ENCODE measurements at regions of chr12 and their contacts with region 1.

Region 1: DNA sequence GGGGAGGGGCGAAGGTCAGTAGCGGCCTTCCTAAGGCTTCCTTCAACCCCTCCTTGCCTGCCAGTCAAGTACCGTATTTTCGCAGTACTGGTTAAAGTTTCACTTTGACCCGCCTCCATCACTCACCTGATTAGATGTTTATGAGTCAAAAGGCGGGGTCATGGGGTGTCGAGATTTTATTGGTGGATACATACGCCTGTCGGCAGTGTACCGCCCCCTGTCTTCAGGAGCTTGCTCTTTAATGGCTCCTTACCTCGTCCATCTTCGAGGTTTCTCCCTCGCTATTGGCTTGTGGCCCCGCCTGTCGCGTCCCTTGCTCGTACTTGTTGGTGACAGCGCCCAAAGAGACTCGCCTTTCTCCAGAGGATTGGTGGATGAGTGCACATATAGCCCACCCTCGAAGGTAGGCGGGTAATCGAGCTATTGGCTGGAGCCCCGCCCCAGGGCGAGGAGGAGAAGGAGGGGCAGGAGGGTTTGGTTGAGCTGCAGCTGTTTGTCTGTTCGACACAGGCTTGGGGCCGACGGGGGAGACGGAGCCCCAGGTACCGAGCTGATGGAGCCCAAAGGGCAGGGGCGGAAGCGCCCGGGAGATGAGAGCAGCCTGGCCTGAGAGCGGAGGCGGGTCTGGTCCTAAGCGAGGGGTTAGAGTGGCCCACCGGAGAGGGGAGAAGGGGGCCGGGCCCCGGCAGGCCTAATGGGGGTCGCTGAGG is at the start of gene RAB5B:
- DNase-seq: peak; percentile 99
- H3K4me3 Mint-ChIP-seq: no peak within 1 kb of the TSS
- H3K27ac Mint-ChIP-seq: no peak within 1 kb of the TSS
- H3K4me1 Mint-ChIP-seq: peaks cover 28% of the 10 kb centered on the region
- H3K27me3 Mint-ChIP-seq: no peaks in the 10 kb centered on the region
- total RNA-seq, gene RAB5B: 70.1 to 71.5 TPM

Region 2: DNA sequence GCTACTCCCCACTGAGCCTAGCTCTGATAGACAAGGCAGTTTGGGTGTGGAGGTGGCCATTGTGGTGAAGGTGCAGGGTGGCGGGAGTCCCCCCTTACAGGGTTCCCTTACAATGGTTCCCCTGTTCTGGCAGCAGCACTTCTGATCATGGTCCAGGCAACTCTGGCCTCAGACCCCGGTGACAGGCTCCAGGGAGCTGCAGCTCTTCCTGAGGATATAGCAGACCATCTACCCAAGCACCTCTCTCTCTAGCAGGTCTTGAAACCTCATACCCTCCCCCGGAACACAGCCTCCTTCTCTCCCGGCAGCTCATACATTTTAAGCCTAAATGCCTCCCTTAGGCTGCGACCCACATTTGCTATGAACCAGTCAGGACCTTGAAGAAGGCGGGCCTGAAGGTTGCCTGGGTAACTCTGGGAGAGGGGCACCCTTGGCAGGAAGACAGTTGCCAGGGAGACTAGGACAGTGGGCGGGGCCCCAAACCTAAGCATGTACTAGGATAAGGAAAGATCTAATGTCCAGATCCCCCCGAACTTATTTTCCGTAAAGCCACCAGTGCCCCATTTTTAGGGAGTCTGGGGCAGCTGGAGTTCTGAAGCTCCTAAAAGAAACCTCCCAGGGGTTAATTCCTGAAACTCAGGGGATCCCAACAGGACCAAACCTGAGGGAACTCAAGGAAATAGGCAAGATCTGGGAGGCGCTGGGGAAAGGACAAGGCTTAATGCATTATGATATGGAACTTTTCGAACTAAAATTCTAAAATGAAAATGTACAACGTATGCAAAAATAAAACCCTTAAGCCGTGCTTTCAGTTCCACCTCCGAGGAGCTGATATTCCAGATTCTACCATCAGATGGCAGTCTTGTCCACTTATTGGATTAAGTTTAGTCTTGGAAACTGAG is 235.4 kb before region 1 on chr12:
- CTCF ChIA-PET with region 1: interaction called, 22 read pairs
- POLR2A ChIA-PET with region 1: interaction called, 11 read pairs
- DNase-seq: peak; percentile 87
- H3K4me3 Mint-ChIP-seq: peak overlapping the region; percentile 88
- H3K27ac Mint-ChIP-seq: peak overlapping the region; percentile 84
- H3K4me1 Mint-ChIP-seq: peaks cover 33% of the 10 kb centered on the region
- H3K27me3 Mint-ChIP-seq: peaks cover 11% of the 10 kb centered on the region

Region 3: GRCh38 chr12:55829967-55830600 is 143.7 kb before region 1 on chr12:
- CTCF ChIA-PET with region 1: interaction called, 4 read pairs
- POLR2A ChIA-PET with region 1: interaction called, 10 read pairs
- DNase-seq: peak; percentile 50
- H3K4me3 Mint-ChIP-seq: peak overlapping the region; percentile 99
- H3K27ac Mint-ChIP-seq: peak overlapping the region; percentile 94
- H3K4me1 Mint-ChIP-seq: peaks cover 54% of the 10 kb centered on the region
- H3K27me3 Mint-ChIP-seq: no peaks in the 10 kb centered on the region

Region 4: DNA sequence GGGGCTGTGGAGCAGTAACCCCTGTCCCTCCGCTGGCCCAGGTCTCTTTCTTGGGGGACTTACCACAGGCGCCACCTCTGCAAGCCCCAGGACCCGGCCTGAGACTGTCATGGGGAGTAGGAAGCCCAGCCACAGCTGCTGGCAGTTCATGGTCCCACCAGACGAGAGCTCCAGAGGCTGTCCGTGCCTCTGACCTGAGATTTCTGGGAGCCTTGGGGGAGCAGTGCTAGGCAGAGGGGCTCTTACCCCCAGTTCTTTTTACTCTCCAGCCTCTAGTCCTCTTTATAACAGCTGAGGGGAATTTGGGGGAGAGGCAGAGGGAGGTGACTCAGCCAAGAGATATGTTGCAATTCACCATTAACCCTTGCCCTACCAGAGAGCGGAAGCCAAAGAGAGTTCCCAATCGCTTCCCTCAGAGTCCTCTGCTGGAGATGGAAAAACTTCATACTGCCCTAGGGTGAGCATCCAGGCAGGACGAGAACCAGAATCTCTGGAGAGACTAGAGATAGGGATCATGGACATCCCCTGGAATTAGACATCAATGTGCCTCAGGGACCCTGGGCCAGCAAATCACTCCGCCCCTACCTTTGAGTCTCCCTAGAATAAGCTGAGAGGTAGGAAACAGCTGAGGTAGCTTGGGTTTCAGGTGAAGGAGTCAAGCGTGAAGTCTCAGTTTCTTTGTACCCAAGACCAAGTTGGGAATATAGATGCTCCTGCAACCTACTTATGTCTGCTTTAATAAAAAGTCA is 130.9 kb before region 1 on chr12 and contains the start of gene MMP19:
- CTCF ChIA-PET with region 1: no interaction called
- POLR2A ChIA-PET with region 1: no interaction called
- DNase-seq: no peak
- H3K4me3 Mint-ChIP-seq: no peak within 1 kb of the TSS
- H3K27ac Mint-ChIP-seq: no peak within 1 kb of the TSS
- H3K4me1 Mint-ChIP-seq: peaks cover 10% of the 10 kb centered on the region
- H3K27me3 Mint-ChIP-seq: peaks cover 6% of the 10 kb centered on the region
- total RNA-seq, gene MMP19: not detected

Region 5: DNA sequence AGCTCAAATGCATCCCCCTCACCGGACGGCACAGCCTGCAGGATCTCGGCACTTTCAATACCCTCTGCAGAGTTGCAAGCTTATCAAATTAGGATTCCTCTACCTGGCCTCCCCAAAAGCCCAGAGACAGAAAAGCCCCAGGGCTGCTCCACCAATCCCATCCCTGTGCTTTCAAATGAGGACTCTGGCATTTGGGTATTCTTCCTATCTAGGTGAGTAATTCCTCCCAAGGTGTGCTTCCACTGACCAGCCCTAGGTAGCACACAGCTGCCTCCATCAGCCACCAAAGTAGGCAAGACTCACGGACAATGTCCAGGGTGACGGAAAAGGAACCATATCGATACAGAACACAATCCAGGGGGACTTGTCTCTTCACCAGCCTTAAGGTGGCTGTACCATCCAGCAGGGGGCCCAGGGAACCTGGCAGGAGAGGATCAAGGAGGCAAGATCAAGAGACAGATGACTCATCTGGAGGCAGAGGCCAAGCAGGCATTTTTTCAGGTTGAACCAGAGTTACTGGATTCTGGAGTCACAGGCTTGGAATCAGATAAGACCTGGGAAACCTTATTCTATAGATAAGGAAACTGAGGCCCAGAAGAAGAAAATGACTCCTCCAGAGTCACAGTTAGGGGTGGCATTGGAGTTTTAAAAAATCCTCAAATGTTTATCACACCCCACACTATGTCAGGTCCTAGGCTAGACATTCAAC is 17.8 kb before region 1 on chr12:
- CTCF ChIA-PET with region 1: interaction called, 6 read pairs
- POLR2A ChIA-PET with region 1: interaction called, 37 read pairs
- DNase-seq: peak; percentile 43
- H3K4me3 Mint-ChIP-seq: no peak overlapping the region
- H3K27ac Mint-ChIP-seq: peak overlapping the region; percentile 7
- H3K4me1 Mint-ChIP-seq: peaks cover 3% of the 10 kb centered on the region
- H3K27me3 Mint-ChIP-seq: no peaks in the 10 kb centered on the region

Region 6: GRCh38 chr12:56020423-56021184 is 46.9 kb after region 1 on chr12 and contains the start of gene IKZF4:
- CTCF ChIA-PET with region 1: no interaction called
- POLR2A ChIA-PET with region 1: interaction called, 14 read pairs
- DNase-seq: peak; percentile 32
- H3K4me3 Mint-ChIP-seq: peak within 1 kb of the TSS; percentile 98
- H3K27ac Mint-ChIP-seq: peak within 1 kb of the TSS; percentile 94
- H3K4me1 Mint-ChIP-seq: peaks cover 55% of the 10 kb centered on the region
- H3K27me3 Mint-ChIP-seq: no peaks in the 10 kb centered on the region
- total RNA-seq, gene IKZF4: 17.6 to 19.4 TPM

Region 7: GRCh38 chr12:56041552-56042429 is 68.0 kb after region 1 on chr12 and contains the start of gene RPS26:
- CTCF ChIA-PET with region 1: interaction called, 13 read pairs
- POLR2A ChIA-PET with region 1: interaction called, 11 read pairs
- DNase-seq: peak; percentile 94
- H3K4me3 Mint-ChIP-seq: peak within 1 kb of the TSS; percentile 100
- H3K27ac Mint-ChIP-seq: peak within 1 kb of the TSS; percentile 99
- H3K4me1 Mint-ChIP-seq: peaks cover 60% of the 10 kb centered on the region
- H3K27me3 Mint-ChIP-seq: no peaks in the 10 kb centered on the region
- total RNA-seq, gene RPS26: 30.4 to 35.0 TPM

Measured in activated CD4-positive, alpha-beta memory T cell treated with anti-CD3 and anti-CD28 coated beads, Interleukin-2, amount 10 ng/mL, durations not matched to agents 7 days and 5 days (primary cell).